ENCODE measurements at regions of chr10 and their contacts with region 1.

Region 1: GRCh38 chr10:43105102-43105785 is 28.4 kb downstream of the RET start:
- DNase-seq: peak; percentile 75
- H3K4me3 ChIP-seq: peak overlapping the region; percentile 28 to 55 (median 42)
- H3K27ac ChIP-seq: no peak overlapping the region
- H3K4me1 ChIP-seq: peaks cover 0 to 14% (median 12%) of the 10 kb centered on the region in 4 donors
- H3K27me3 ChIP-seq: peaks cover 20% of the 10 kb centered on the region
- CTCF ChIP-seq: peak; percentile 95 to 100 (median 99)
- EP300 ChIP-seq: no peak
- POLR2A ChIP-seq: no peak

Region 2: GRCh38 chr10:42753126-42753506 is 352.1 kb before region 1 on chr10:
- in situ Hi-C with region 1: no loop called
- intact Hi-C with region 1: loop called (anchors 5 kb)
- DNase-seq: peak; percentile 83
- H3K4me3 ChIP-seq: peak overlapping the region; percentile 6 to 66 (median 42)
- H3K27ac ChIP-seq: peak overlapping the region; percentile 37 to 57 (median 50)
- H3K4me1 ChIP-seq: peaks cover 0 to 30% (median 25%) of the 10 kb centered on the region in 4 donors
- H3K27me3 ChIP-seq: peaks cover 54% of the 10 kb centered on the region
- CTCF ChIP-seq: peak; percentile 76 to 93 (median 87)
- EP300 ChIP-seq: no peak
- POLR2A ChIP-seq: no peak

Region 3: DNA sequence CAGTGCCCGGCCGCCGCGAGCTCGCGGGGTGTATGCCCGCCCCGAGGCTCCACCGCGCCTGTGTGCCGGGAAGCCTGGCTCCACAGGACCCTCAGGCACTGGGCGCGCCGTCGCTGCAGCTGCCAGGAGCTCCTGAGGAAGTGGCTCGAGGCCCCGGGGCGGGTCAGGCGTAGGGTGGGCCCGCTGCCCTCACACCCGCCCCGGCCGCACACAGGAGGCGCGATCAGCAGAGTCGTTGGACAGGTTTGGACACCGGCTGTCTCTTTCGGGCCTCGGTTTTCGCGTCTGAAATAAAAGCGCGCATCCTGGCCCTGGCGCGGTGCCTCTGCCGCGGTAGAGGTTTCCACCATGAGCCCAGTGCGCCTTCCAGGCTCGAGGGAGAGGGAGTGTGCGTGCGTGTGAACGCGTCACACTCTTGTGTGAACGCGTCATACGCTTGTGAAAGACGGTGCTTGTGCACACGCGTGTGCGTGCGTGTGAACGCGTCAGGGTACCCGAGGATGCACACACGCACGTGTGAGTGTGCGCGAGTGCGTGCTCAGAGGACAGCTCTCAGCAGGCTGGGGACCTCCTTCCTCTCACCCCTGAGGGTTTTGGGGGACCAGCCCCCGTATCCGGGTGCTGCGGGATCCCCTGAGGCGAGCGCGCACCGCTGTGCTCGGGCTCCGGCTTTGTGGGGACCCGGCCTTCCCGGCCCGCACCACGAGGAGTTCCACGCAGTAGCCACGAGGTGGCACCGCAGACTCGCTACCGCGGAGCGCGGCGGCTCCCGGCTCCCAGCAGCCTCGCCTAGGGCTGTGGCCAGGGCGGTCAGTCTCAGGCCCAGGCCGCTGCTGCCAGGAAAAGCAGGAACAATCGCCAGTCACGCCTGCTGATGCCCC is 238.9 kb before region 1 on chr10:
- in situ Hi-C with region 1: loop called in 2 of 4 experiments (anchors 10 to 25 kb)
- intact Hi-C with region 1: loop called (anchors 5 kb)
- DNase-seq: peak; percentile 64
- H3K4me3 ChIP-seq: peak overlapping the region in 1 of 4 donors; percentile 28
- H3K27ac ChIP-seq: no peak overlapping the region
- H3K4me1 ChIP-seq: peaks cover 0 to 14% (median 6%) of the 10 kb centered on the region in 4 donors
- H3K27me3 ChIP-seq: peaks cover 39% of the 10 kb centered on the region
- CTCF ChIP-seq: peak; percentile 52 to 79 (median 66)
- EP300 ChIP-seq: no peak
- POLR2A ChIP-seq: no peak

Region 4: GRCh38 chr10:43078987-43079275 is 26.3 kb before region 1 on chr10:
- in situ Hi-C with region 1: no loop called
- intact Hi-C with region 1: no loop called
- DNase-seq: peak; percentile 13
- H3K4me3 ChIP-seq: no peak overlapping the region
- H3K27ac ChIP-seq: no peak overlapping the region
- H3K4me1 ChIP-seq: peaks cover 0 to 20% (median 17%) of the 10 kb centered on the region in 4 donors
- H3K27me3 ChIP-seq: peaks cover 50% of the 10 kb centered on the region
- CTCF ChIP-seq: peak; percentile 10 to 32 (median 24)
- EP300 ChIP-seq: no peak
- POLR2A ChIP-seq: no peak

Region 5: DNA sequence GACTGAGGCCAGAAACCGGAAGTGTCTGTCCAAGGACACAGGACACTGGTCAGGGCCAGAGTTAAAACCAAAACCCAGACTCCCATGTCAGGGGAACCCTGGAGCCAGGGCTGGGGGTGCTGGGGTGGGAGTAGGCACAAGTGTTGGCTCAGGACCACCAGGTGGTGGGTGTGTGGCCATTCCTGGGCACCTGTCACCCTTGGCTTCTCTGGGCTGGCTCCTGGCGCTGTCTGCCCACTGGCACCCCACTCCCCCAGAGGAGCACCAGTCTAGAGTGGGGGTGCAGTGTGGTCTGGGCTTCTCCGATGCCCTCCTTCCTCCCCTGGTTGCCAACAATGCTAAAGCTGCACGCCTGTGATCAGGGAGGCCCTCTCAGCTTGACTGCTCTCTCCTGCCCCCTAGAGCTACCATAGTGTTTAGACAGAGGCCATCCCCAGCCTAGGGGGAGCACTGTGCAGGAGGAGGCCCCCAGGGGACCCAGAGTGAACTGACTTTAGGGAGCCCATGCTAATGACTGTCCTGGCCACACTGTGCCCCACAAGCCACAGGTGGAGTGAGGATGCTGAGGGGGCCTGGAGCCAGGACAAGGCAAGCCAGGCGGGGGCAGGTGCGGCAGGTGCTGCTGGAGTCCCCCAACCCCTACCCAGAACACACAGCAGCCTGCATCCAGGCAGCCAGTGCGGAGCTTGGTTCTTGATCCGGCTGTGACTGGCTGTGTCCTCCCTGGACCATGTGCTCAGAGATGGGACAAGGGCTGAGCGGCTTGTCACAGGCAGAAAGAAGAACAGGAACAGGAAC is 150.6 kb after region 1 on chr10:
- in situ Hi-C with region 1: no loop called
- intact Hi-C with region 1: no loop called
- DNase-seq: no peak
- H3K4me3 ChIP-seq: no peak overlapping the region
- H3K27ac ChIP-seq: no peak overlapping the region
- H3K4me1 ChIP-seq: no peaks in the 10 kb centered on the region
- H3K27me3 ChIP-seq: no peaks in the 10 kb centered on the region
- CTCF ChIP-seq: peak in 4 of 5 experiments; percentile 11 to 16 (median 14)
- EP300 ChIP-seq: no peak
- POLR2A ChIP-seq: no peak